Mammary epithelial cell (primary cell): ENCODE measurements at regions of chr14 and their contacts with region 1.

Region 1: GRCh38 chr14:25111061-25111601 is 61.2 kb upstream of the STXBP6 start:
- DNase-seq: peak; percentile 89
- H3K4me3 ChIP-seq: no peak overlapping the region
- H3K27ac ChIP-seq: peak overlapping the region; percentile 61
- H3K4me1 ChIP-seq: no peaks in the 10 kb centered on the region
- H3K27me3 ChIP-seq: no peaks in the 10 kb centered on the region
- CTCF ChIP-seq: no peak

Region 2: DNA sequence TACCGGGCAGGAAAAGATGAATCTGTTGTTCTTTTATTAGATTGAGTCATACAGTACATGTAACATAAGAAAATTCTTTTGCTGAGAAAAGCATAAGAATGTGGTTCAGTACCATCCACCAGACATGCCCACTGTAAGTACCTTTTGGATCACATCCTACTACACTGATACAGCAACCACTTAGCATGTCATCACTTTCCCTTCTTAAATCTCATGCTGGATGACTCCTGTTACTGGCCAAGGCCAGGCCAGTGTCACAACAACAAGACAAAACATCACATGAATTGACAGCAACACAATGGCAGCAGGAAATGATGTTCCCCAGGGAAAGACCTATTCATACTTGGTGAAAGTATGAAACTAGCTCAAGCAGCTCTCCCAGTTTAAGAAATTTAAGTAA is 107.6 kb before region 1 on chr14:
- CTCF ChIA-PET with region 1: no interaction called
- dilution Hi-C with region 1: no loop called
- in situ Hi-C with region 1: no loop called
- intact Hi-C with region 1: loop called (anchors 1 kb)
- DNase-seq: peak; percentile 76
- H3K4me3 ChIP-seq: no peak overlapping the region
- H3K27ac ChIP-seq: no peak overlapping the region
- H3K4me1 ChIP-seq: no peaks in the 10 kb centered on the region
- H3K27me3 ChIP-seq: no peaks in the 10 kb centered on the region
- CTCF ChIP-seq: no peak

Region 3: GRCh38 chr14:25090716-25091454 is 20.2 kb before region 1 on chr14:
- CTCF ChIA-PET with region 1: no interaction called
- dilution Hi-C with region 1: no loop called
- in situ Hi-C with region 1: no loop called
- intact Hi-C with region 1: loop called (anchors 2 kb)
- DNase-seq: peak; percentile 75
- H3K4me3 ChIP-seq: no peak overlapping the region
- H3K27ac ChIP-seq: no peak overlapping the region
- H3K4me1 ChIP-seq: no peaks in the 10 kb centered on the region
- H3K27me3 ChIP-seq: no peaks in the 10 kb centered on the region
- CTCF ChIP-seq: no peak

Region 4: DNA sequence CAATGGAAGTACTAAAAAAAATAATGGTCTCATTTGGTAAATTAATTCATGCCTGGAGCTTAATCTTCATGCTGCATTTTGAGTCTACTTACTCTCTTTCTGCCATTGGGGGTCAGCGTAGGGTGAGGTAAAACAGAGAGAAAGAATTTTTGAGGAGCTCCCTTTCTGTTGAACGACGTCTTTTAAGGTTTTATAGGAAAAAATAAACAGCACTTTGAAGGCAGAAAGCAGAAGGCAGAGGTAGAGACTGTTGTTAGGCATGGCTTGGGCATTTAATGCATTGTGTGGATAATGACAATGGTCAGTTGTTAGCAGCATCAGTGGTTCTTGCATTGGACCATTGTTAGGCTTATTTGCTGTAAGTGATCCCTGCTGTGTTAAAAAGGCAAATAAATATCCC is 496.1 kb after region 1 on chr14:
- CTCF ChIA-PET with region 1: no interaction called
- dilution Hi-C with region 1: no loop called
- in situ Hi-C with region 1: no loop called
- intact Hi-C with region 1: no loop called
- DNase-seq: no peak
- H3K4me3 ChIP-seq: no peak overlapping the region
- H3K27ac ChIP-seq: no peak overlapping the region
- H3K4me1 ChIP-seq: no peaks in the 10 kb centered on the region
- H3K27me3 ChIP-seq: no peaks in the 10 kb centered on the region
- CTCF ChIP-seq: no peak

Region 5: GRCh38 chr14:26163791-26164190 is 1052.7 kb after region 1 on chr14:
- CTCF ChIA-PET with region 1: no interaction called
- dilution Hi-C with region 1: no loop called
- in situ Hi-C with region 1: no loop called
- intact Hi-C with region 1: no loop called
- DNase-seq: no peak
- H3K4me3 ChIP-seq: no peak overlapping the region
- H3K27ac ChIP-seq: no peak overlapping the region
- H3K4me1 ChIP-seq: no peaks in the 10 kb centered on the region
- H3K27me3 ChIP-seq: no peaks in the 10 kb centered on the region
- CTCF ChIP-seq: peak in 1 of 2 donors; percentile 10